ENCODE measurements at regions of chr2 and their contacts with region 1.

Region 1: GRCh38 chr2:95076784-95077529 is 44.7 kb downstream of the MRPS5 start:
- DNase-seq: peak; percentile 70 to 75 (median 73)
- ATAC-seq: peak; percentile 95
- H3K4me3 ChIP-seq: peak overlapping the region; percentile 40
- H3K27ac ChIP-seq: no peak overlapping the region
- H3K4me1 ChIP-seq: peaks cover 0 to 10% of the 10 kb centered on the region in 2 experiments; a peak in 3 of 5 replicates
- H3K27me3 ChIP-seq: peaks cover 9 to 60% of the 10 kb centered on the region in 2 experiments; a peak in 3 of 5 replicates
- CTCF ChIP-seq: peak; percentile 75 to 81 (median 80)
- EP300 ChIP-seq: no peak
- POLR2A ChIP-seq: no peak
- RAD21 ChIP-seq: peak; percentile 35 to 69

Region 2: DNA sequence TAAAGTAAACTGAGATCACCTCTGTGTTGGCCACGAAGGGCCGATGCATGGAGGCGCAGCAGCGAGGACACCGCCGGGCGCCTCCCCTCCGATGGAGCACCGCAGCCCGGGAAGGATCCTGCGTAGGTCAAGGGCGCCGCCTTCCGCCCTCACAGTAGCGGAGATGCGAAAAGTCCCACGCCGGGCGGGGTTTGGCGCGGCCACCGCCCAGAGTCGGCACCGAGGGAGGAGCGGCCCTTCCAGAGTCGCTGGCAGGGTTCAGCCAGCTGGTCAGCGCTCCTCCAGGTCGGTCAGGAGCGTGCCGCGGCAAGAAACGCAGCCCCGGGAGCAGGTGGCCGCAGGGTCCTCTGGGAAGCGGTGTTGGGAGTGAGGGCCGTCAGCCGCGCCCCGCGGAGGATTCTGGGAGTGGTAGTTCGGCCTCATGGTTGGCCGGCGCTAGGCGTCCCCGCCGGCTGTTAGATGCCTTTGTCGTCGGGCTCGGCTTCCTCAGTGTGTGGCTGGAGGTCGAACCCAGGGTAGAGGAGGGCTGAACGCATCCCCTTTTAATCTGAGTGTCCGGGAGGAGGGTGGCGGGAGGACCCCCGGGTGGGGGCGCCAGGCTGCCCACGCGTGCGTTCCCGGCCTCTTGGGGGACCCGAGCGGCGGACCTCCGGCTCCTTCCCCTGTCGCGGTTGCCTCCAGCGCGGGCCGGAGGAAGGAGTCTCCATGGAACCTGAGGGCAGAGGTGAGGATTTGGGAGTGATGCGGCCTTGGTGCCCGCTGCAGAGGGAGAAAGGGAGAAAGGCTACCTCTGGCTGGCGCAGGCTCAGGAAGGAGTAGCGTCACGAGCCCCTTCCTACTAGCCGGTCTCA is 130.4 kb after region 1 on chr2 and contains the start of gene ZNF892:
- CTCF ChIA-PET with region 1: interaction called, 11 read pairs
- POLR2A ChIA-PET with region 1: no interaction called
- in situ Hi-C with region 1: no loop called
- intact Hi-C with region 1: loop called (anchors 5 kb)
- DNase-seq: peak; percentile 75 to 85 (median 80)
- ATAC-seq: peak; percentile 99
- H3K4me3 ChIP-seq: peak within 1 kb of the TSS; percentile 54
- H3K27ac ChIP-seq: 0 out of 3 replicates have a peak within 1 kb of the TSS, but pooled peaks have one; percentile 29
- H3K4me1 ChIP-seq: peaks cover 0 to 10% of the 10 kb centered on the region in 2 experiments; a peak in 2 of 5 replicates
- H3K27me3 ChIP-seq: no peaks in the 10 kb centered on the region
- CTCF ChIP-seq: peak; percentile 68 to 83 (median 81)
- EP300 ChIP-seq: no peak
- POLR2A ChIP-seq: no peak
- RAD21 ChIP-seq: peak; percentile 70 to 73
- polyA plus RNA-seq, gene ZNF892: not detected

Region 3: DNA sequence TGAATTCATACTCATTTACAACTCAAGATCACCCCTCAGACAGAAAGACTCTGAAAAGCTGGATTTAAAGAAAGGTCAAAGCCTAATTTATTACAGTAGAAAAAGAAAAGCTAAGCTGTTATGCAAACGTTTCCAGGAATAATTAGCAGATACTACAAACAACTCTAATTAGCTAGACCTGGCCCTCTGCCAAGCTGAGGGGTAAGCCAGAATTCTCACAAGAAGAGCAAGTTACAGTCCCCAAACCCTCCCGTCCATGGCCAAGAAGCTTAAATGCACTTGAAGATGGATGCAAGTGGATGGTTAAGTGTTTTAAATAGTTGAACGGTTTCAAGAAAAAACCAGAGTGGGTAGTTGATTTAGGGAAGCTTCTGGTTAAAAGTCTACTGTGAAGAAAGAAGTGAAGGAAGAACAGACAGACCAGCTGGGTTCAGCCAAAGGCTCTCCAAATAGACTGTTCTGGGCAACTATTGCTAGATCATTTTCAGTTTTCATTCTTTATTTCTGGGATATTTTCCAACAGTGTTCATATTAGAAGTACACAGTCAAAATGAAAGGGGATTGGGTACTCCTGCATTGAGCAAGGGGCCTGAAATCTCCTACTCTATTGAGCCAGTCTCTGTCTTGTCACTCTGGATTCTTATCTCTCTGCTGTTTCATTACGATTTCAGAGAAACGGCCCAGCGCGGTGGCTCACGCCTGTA is 1658.1 kb after region 1 on chr2:
- CTCF ChIA-PET with region 1: no interaction called
- POLR2A ChIA-PET with region 1: no interaction called
- in situ Hi-C with region 1: no loop called
- intact Hi-C with region 1: no loop called
- DNase-seq: peak in 1 of 4 experiments; percentile 34
- ATAC-seq: no peak
- H3K4me3 ChIP-seq: no peak overlapping the region
- H3K27ac ChIP-seq: peak overlapping the region; percentile 6; the same call in 1 of the 3 replicates
- H3K4me1 ChIP-seq: peaks cover 8 to 9% of the 10 kb centered on the region in 2 experiments; a peak in 4 of 5 replicates
- H3K27me3 ChIP-seq: no peaks in the 10 kb centered on the region
- CTCF ChIP-seq: no peak
- EP300 ChIP-seq: no peak
- POLR2A ChIP-seq: no peak
- RAD21 ChIP-seq: no peak